Calu3 (cell line): ENCODE measurements at regions of chr6 and their contacts with region 1.

Region 1: GRCh38 chr6:127013865-127014264 is 104.6 kb upstream of the RSPO3 start:
- DNase-seq: no peak
- H3K4me3 Mint-ChIP-seq: no peak overlapping the region
- H3K27ac Mint-ChIP-seq: no peak overlapping the region
- H3K4me1 Mint-ChIP-seq: peaks cover 14% of the 10 kb centered on the region
- H3K27me3 Mint-ChIP-seq: no peaks in the 10 kb centered on the region
- CTCF ChIP-seq: no peak

Region 2: GRCh38 chr6:126182650-126183311 is 831.1 kb before region 1 on chr6:
- CTCF ChIA-PET with region 1: no interaction called
- intact Hi-C with region 1: no loop called
- DNase-seq: peak; percentile 81
- H3K4me3 Mint-ChIP-seq: peak overlapping the region; percentile 44
- H3K27ac Mint-ChIP-seq: peak overlapping the region; percentile 93
- H3K4me1 Mint-ChIP-seq: peaks cover 37% of the 10 kb centered on the region
- H3K27me3 Mint-ChIP-seq: no peaks in the 10 kb centered on the region
- CTCF ChIP-seq: no peak

Region 3: GRCh38 chr6:126824226-126824625 is 189.6 kb before region 1 on chr6:
- CTCF ChIA-PET with region 1: no interaction called
- intact Hi-C with region 1: no loop called
- DNase-seq: no peak
- H3K4me3 Mint-ChIP-seq: no peak overlapping the region
- H3K27ac Mint-ChIP-seq: no peak overlapping the region
- H3K4me1 Mint-ChIP-seq: no peaks in the 10 kb centered on the region
- H3K27me3 Mint-ChIP-seq: no peaks in the 10 kb centered on the region
- CTCF ChIP-seq: no peak

Region 4: GRCh38 chr6:127069659-127070279 is 55.9 kb after region 1 on chr6:
- CTCF ChIA-PET with region 1: no interaction called
- intact Hi-C with region 1: loop called (anchors 2 kb)
- DNase-seq: no peak
- H3K4me3 Mint-ChIP-seq: no peak overlapping the region
- H3K27ac Mint-ChIP-seq: no peak overlapping the region
- H3K4me1 Mint-ChIP-seq: no peaks in the 10 kb centered on the region
- H3K27me3 Mint-ChIP-seq: no peaks in the 10 kb centered on the region
- CTCF ChIP-seq: peak; percentile 25